Activated T-helper 2 cell treated with anti-CD3 and anti-CD28 coated beads, Interferon-gamma antibody, Interleukin-2, Interleukin-4, amounts not matched to agents 10 μg/mL and 5 μg/mL and 100 μg/mL, durations not matched to agents 14 hours and 24 hours and 36 hours (primary cell): ENCODE measurements at regions of chr1 and their contacts with region 1.

Region 1: GRCh38 chr1:116514708-116515525 is 55.9 kb downstream of the CD58 start:
- DNase-seq: peak; percentile 68
- H3K4me3 Mint-ChIP-seq: peak overlapping the region; percentile 50
- H3K27ac Mint-ChIP-seq: peak overlapping the region; percentile 94
- H3K4me1 Mint-ChIP-seq: peaks cover 63% of the 10 kb centered on the region
- H3K27me3 Mint-ChIP-seq: no peaks in the 10 kb centered on the region

Region 2: DNA sequence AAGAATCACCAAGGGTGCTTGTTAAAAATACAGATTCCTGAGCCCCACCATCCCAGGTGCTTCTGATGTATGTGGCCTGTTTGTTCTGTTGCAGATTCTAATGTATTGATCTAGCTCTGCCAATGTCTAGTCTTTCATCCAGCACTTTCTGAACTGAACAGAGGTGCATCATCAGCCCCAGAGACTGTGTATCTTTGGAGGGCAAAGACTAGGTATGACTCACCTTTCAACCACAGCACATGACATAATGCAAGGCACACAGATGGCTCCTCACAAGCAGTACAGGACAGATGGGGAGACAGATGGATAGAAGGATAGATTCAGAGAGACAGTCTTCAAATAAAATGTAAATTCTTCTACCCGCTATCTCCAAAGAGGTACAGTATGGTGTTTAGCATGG is 23.6 kb after region 1 on chr1:
- intact Hi-C with region 1: loop called (anchors 1 kb)
- DNase-seq: peak; percentile 40
- H3K4me3 Mint-ChIP-seq: no peak overlapping the region
- H3K27ac Mint-ChIP-seq: peak overlapping the region; percentile 62
- H3K4me1 Mint-ChIP-seq: peaks cover 54% of the 10 kb centered on the region
- H3K27me3 Mint-ChIP-seq: no peaks in the 10 kb centered on the region